ENCODE measurements at regions of chr1 and their contacts with region 1.

Region 1: GRCh38 chr1:27392096-27392777 is at the start of gene GPR3:
- DNase-seq: peak; percentile 88
- H3K4me3 ChIP-seq: peak within 1 kb of the TSS; percentile 21 to 40
- H3K27ac ChIP-seq: peak within 1 kb of the TSS; percentile 15 to 63
- H3K4me1 ChIP-seq: peaks cover 14% of the 10 kb centered on the region
- H3K27me3 ChIP-seq: no peaks in the 10 kb centered on the region
- CTCF ChIP-seq: peak; percentile 21 to 75 (median 62)
- POLR2A ChIP-seq: peak; percentile 32
- total RNA-seq, gene GPR3: 0.14 to 0.57 TPM

Region 2: DNA sequence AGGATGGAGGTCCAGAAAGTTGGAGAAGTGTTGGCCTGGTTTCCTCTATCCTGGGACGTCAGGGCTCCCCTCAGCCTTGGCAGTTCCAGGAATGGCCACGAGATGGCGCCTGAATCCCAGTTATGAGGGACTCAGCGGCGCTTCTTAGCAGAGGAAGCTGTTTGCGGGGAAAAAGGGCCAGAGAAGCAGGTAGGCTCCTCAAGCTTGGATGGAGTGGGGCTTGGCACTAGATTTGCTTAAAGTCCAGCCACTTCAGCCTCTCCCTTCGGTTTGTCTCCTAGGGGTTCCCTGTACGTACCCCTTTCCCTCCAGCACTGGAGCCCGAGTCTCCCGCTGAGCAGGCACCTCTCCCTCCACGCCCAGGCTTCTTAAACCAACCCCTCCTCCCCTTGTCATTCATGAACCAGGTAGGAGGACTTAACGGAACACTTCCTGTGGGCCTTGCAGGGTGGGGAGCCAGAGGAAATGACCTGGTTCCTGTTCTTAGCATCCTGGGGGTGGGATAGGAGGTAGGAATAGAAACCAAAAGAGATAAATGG is 347.6 kb before region 1 on chr1:
- intact Hi-C with region 1: loop called (anchors 10 kb)
- DNase-seq: peak; percentile 86
- H3K4me3 ChIP-seq: no peak overlapping the region
- H3K27ac ChIP-seq: no peak overlapping the region
- H3K4me1 ChIP-seq: no peaks in the 10 kb centered on the region
- H3K27me3 ChIP-seq: no peaks in the 10 kb centered on the region
- CTCF ChIP-seq: peak; percentile 93 to 99 (median 98)
- POLR2A ChIP-seq: no peak

Region 3: GRCh38 chr1:27102707-27103491 is 289.3 kb before region 1 on chr1:
- intact Hi-C with region 1: loop called (anchors 10 kb)
- DNase-seq: peak; percentile 66
- H3K4me3 ChIP-seq: no peak overlapping the region
- H3K27ac ChIP-seq: no peak overlapping the region
- H3K4me1 ChIP-seq: peaks cover 6% of the 10 kb centered on the region
- H3K27me3 ChIP-seq: no peaks in the 10 kb centered on the region
- CTCF ChIP-seq: peak; percentile 91 to 99 (median 98)
- POLR2A ChIP-seq: no peak

Region 4: GRCh38 chr1:27300341-27301051 is 91.7 kb before region 1 on chr1:
- intact Hi-C with region 1: loop called (anchors 2 kb)
- DNase-seq: peak; percentile 79
- H3K4me3 ChIP-seq: no peak overlapping the region
- H3K27ac ChIP-seq: peak overlapping the region; percentile 77 to 84
- H3K4me1 ChIP-seq: peaks cover 4% of the 10 kb centered on the region
- H3K27me3 ChIP-seq: no peaks in the 10 kb centered on the region
- CTCF ChIP-seq: peak; percentile 95 to 99 (median 98)
- POLR2A ChIP-seq: no peak

Region 5: DNA sequence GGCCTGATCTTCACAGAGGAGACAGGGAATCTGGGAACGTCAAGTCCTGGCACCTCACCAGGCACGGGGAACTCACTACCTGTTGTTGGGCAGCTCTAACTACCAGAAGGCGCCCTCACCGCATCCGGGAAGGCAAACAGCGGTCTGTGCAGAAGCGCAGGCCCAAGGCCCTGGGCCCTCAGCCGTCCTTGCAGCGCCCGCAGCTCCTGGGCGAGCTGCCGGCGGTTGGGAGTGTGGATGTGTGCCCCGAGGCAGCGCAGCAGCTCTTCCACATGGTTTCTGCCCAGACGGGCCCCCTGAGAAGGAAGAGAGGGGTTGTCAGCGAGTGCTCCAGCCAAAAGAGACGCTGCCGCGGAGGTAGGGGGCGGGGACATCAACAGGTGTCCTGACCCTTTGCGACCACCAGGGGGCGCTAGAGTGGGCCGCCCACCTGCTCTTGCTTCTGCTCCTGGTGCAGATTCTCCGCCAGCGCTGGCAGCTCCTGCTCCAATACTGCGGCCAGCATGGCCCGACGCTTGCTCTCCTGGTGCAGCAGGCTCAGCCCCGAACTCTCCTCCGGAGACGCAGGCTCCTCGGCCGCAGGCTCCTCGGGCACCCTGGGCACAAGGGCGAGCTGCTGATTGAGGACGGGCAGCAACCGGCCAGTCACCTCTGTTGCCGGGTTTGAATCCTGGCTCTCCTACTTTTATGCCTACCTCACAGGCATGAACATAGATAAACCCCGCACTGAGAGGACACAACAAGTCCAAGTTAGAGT is 34.8 kb before region 1 on chr1:
- intact Hi-C with region 1: loop called (anchors 2 kb)
- DNase-seq: peak; percentile 77
- H3K4me3 ChIP-seq: peak overlapping the region in 1 of 2 donors; percentile 20
- H3K27ac ChIP-seq: peak overlapping the region; percentile 82 to 83
- H3K4me1 ChIP-seq: no peaks in the 10 kb centered on the region
- H3K27me3 ChIP-seq: no peaks in the 10 kb centered on the region
- CTCF ChIP-seq: peak; percentile 97 to 99 (median 98)
- POLR2A ChIP-seq: no peak

Region 6: DNA sequence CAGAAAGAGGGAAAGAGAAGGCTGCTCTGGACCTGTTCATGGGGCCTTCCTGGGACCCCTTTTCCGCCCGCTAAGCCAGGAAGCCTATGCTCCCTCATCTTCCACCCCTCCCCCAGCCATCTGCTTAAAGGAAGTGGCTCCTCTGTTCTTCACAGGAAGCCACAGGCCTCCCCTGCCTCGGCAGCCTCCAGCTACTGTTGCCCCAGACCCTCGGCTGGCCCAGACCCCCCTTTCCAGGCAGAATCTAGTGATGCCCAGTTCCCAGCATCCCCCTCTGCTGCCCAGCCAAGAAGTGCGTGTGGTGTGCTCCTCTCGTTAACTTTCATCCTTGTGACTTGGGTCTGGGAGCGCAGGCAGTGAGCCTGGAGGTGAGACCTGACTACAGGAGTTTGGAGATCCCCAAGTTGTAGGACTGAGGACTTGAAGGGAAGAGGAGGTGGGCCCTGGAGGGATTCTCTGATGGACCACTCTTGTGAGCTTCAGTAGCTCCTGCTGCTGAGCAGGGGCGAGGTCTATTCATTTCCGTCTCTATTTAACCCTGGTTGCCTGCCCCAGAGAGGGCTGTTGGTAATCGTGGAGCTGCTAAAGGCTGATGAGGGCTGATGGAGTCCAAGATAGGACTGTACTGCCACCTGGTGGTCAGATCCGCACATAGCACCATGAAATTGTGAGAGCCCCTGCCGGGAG is 270.6 kb after region 1 on chr1:
- intact Hi-C with region 1: loop called (anchors 5 kb)
- DNase-seq: peak; percentile 73
- H3K4me3 ChIP-seq: no peak overlapping the region
- H3K27ac ChIP-seq: peak overlapping the region in 1 of 2 donors; percentile 10
- H3K4me1 ChIP-seq: no peaks in the 10 kb centered on the region
- H3K27me3 ChIP-seq: no peaks in the 10 kb centered on the region
- CTCF ChIP-seq: peak; percentile 74 to 97 (median 96)
- POLR2A ChIP-seq: no peak

Measured in prostate gland (tissue), 2 donors.